ENCODE measurements at regions of chr5 and their contacts with region 1.

Region 1: GRCh38 chr5:115551415-115551814 is 6.8 kb upstream of the FEM1C start:
- DNase-seq: no peak
- ATAC-seq: peak; percentile 27
- H3K4me3 ChIP-seq: no peak overlapping the region
- H3K27ac ChIP-seq: no peak overlapping the region
- H3K4me1 ChIP-seq: no peaks in the 10 kb centered on the region
- H3K27me3 ChIP-seq: no peaks in the 10 kb centered on the region
- CTCF ChIP-seq: no peak
- EP300 ChIP-seq: no peak
- POLR2A ChIP-seq: no peak
- RAD21 ChIP-seq: no peak

Region 2: GRCh38 chr5:115571441-115571878 is 20.0 kb after region 1 on chr5:
- CTCF ChIA-PET with region 1: interaction called, 58 read pairs
- POLR2A ChIA-PET with region 1: interaction called, 4 read pairs
- RAD21 ChIA-PET with region 1: interaction called, 66 read pairs
- SMC1A ChIA-PET with region 1: interaction called, 74 read pairs
- in situ Hi-C with region 1: no loop called
- intact Hi-C with region 1: no loop called
- DNase-seq: no peak
- ATAC-seq: no peak
- H3K4me3 ChIP-seq: no peak overlapping the region
- H3K27ac ChIP-seq: no peak overlapping the region
- H3K4me1 ChIP-seq: peaks cover 15% of the 10 kb centered on the region
- H3K27me3 ChIP-seq: no peaks in the 10 kb centered on the region
- CTCF ChIP-seq: no peak
- EP300 ChIP-seq: no peak
- POLR2A ChIP-seq: no peak
- RAD21 ChIP-seq: no peak

Measured in GM12878 (cell line).